Activated naive CD4-positive, alpha-beta T cell treated with anti-CD3 and anti-CD28 coated beads for 36 hours (primary cell): ENCODE measurements at regions of chr2 and their contacts with region 1.

Region 1: DNA sequence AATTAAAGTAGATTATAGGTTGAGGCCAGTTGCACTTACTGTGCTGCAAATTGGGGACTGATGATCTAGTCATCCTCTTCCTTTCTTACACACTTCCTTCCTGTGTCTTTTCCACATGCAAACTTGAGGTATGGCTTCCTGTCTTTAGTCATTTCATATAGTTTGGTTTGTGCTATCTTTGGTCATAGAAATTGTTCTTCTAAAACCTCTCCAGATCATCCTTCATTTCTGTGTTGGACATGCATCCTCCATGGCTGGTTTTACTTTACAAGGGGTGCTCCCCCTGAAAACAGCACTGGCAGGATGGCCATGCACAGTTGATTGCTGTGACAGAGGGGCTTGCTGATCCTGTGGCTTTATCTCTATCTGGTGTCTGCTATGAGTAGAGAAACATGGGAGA is 36.5 kb downstream of the MGAT5 start:
- DNase-seq: peak; percentile 30
- H3K4me3 Mint-ChIP-seq: no peak overlapping the region
- H3K27ac Mint-ChIP-seq: no peak overlapping the region
- H3K4me1 Mint-ChIP-seq: peaks cover 24% of the 10 kb centered on the region
- H3K27me3 Mint-ChIP-seq: no peaks in the 10 kb centered on the region

Region 2: GRCh38 chr2:133848111-133848649 is 442.2 kb before region 1 on chr2:
- CTCF ChIA-PET with region 1: no interaction called
- intact Hi-C with region 1: no loop called
- DNase-seq: no peak
- H3K4me3 Mint-ChIP-seq: no peak overlapping the region
- H3K27ac Mint-ChIP-seq: no peak overlapping the region
- H3K4me1 Mint-ChIP-seq: peaks cover 5% of the 10 kb centered on the region
- H3K27me3 Mint-ChIP-seq: peaks cover 13% of the 10 kb centered on the region

Region 3: DNA sequence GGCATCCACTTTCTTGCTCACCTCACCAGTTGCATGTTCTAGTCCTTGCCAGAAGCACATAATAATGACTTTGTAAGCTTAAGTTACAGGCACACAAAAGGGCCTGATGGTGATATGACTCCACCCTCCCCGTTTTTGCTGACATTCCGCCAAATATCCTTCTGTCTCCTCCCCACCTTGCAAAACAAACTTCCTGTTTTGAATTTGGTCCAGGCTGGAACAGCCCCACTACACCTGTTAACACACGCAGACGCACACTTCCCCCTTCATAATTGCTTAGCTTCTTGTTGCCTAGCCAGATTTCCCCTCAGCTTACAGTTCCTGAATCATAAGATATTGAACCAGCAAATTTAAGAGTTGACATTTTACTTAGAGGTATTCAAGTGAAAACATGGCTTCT is 36.6 kb before region 1 on chr2 and contains the start of gene MGAT5:
- CTCF ChIA-PET with region 1: interaction called, 3 read pairs
- intact Hi-C with region 1: loop called (anchors 1 kb)
- DNase-seq: no peak
- H3K4me3 Mint-ChIP-seq: no peak within 1 kb of the TSS
- H3K27ac Mint-ChIP-seq: no peak within 1 kb of the TSS
- H3K4me1 Mint-ChIP-seq: peaks cover 82% of the 10 kb centered on the region
- H3K27me3 Mint-ChIP-seq: peaks cover 2% of the 10 kb centered on the region
- total RNA-seq, gene MGAT5: 11.6 to 13.0 TPM

Region 4: GRCh38 chr2:134320930-134321329 is 30.6 kb after region 1 on chr2:
- CTCF ChIA-PET with region 1: no interaction called
- intact Hi-C with region 1: loop called (anchors 1 kb)
- DNase-seq: peak; percentile 75
- H3K4me3 Mint-ChIP-seq: no peak overlapping the region
- H3K27ac Mint-ChIP-seq: no peak overlapping the region
- H3K4me1 Mint-ChIP-seq: peaks cover 42% of the 10 kb centered on the region
- H3K27me3 Mint-ChIP-seq: no peaks in the 10 kb centered on the region